ENCODE measurements at regions of chr13 and their contacts with region 1.

Region 1: DNA sequence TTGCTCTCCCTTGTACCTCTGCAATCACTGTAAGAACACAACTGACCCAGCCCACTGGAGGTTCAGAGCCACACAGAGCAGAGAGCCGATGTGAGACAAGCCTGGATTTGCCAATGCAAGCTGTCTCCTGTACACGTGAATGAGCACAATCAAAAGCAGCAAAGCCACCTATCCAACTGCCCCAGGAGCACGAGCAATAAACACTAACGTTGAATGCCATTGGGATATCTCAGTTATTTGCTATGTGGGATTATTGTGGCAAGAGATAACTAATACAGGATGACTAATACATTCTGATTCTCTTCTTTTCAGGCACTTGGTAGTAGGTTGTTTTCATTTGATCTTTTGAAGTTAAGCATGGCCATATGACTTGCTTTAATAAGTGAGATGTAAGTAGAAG is 85.2 kb upstream of the FAM216B start:
- DNase-seq: no peak
- ATAC-seq: no peak
- H3K4me3 ChIP-seq: no peak overlapping the region
- H3K4me3 Mint-ChIP-seq: no peak overlapping the region
- H3K27ac ChIP-seq: no peak overlapping the region
- H3K27ac Mint-ChIP-seq: no peak overlapping the region
- H3K4me1 ChIP-seq: no peaks in the 10 kb centered on the region
- H3K4me1 Mint-ChIP-seq: no peaks in the 10 kb centered on the region
- H3K27me3 ChIP-seq: peaks cover 0 to 10% of the 10 kb centered on the region in 2 experiments
- H3K27me3 Mint-ChIP-seq: peaks cover 27 to 45% of the 10 kb centered on the region in 2 donors

Region 2: DNA sequence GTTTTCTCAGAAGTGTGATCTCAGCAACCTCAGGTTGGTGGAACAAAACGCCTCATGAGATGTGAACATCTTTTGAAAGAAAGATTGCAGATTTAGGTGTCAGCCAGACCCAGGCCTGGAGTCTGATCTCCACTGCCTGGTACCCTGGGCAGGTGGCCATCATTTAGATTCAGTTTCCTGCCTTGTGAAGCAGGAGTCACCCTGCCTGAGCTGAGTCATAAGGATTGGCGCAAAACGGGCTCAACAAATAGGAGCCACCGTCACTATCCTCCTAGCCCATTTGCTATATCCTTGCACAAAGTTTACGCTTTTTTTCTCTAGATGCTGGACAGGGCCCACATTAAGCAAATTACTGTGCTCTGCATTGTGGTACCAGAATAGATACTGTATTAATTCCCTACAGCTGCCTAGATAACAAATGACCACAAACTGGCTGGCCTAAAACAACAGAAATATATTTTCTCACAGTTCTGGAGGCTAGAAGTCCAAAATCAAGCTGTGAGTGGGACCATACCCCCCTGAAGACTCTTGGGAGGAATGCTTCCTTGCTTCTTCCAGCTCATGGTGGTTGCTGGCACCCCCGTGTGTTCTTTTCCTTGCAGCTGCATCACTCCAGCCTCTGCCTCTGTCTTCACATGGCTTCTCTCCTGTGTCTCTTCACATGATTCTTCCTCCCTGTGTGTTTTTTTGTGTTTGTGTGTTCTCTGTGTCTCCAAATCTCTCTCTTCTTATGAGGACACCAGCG is 84.0 kb before region 1 on chr13:
- CTCF ChIA-PET with region 1: no interaction called
- POLR2A ChIA-PET with region 1: no interaction called
- DNase-seq: no peak
- ATAC-seq: no peak
- H3K4me3 ChIP-seq: no peak overlapping the region
- H3K4me3 Mint-ChIP-seq: no peak overlapping the region
- H3K27ac ChIP-seq: no peak overlapping the region
- H3K27ac Mint-ChIP-seq: no peak overlapping the region
- H3K4me1 ChIP-seq: no peaks in the 10 kb centered on the region
- H3K4me1 Mint-ChIP-seq: no peaks in the 10 kb centered on the region
- H3K27me3 ChIP-seq: peaks cover 0 to 7% of the 10 kb centered on the region in 2 experiments
- H3K27me3 Mint-ChIP-seq: peaks cover 13% of the 10 kb centered on the region in 2 donors

Region 3: GRCh38 chr13:42867232-42867631 is 171.0 kb after region 1 on chr13:
- CTCF ChIA-PET with region 1: no interaction called
- POLR2A ChIA-PET with region 1: interaction called in 1 of 2 experiments, 11 read pairs
- DNase-seq: no peak
- ATAC-seq: no peak
- H3K4me3 ChIP-seq: no peak overlapping the region
- H3K4me3 Mint-ChIP-seq: no peak overlapping the region
- H3K27ac ChIP-seq: no peak overlapping the region
- H3K27ac Mint-ChIP-seq: no peak overlapping the region
- H3K4me1 ChIP-seq: no peaks in the 10 kb centered on the region
- H3K4me1 Mint-ChIP-seq: no peaks in the 10 kb centered on the region
- H3K27me3 ChIP-seq: no peaks in the 10 kb centered on the region
- H3K27me3 Mint-ChIP-seq: peaks cover 4 to 10% of the 10 kb centered on the region in 2 donors

Region 4: DNA sequence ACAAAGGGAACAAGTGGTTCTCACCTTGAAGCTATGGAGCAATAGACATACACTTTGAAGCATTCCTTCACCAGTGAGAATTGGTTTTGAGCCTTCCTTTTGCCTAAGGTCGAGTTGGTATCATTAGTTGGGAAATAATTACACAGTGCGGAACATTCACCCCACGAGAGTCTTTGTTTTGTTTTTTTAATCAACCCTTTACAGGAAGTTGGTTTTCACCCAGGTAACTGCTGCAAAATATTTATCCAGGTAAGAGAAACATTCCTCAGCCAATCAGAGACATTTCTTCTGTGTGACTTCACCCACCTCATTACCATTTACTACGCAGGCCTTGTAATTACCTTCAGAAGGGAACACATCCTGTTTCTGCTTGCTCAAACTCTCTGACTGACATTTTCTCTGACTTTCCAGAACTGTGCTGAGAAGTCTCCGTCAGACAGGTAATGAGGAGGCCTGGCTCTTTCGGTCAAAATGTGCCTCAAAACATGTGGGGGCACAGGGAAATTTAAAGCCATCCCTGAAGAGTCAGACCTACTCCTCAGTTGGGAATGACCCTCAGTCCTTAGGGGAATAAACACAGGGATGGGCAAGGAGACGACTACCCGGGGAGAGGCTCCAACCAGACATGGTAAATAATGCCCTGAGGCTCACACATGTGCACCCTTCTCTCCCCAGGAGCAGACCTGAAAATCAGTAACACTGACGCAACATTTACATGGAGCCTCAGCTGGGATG is 1654.8 kb after region 1 on chr13:
- CTCF ChIA-PET with region 1: no interaction called
- POLR2A ChIA-PET with region 1: no interaction called
- DNase-seq: peak in 1 of 35 experiments; percentile 7
- ATAC-seq: peak in 2 of 4 experiments; percentile 38 to 70
- H3K4me3 ChIP-seq: no peak overlapping the region
- H3K4me3 Mint-ChIP-seq: no peak overlapping the region
- H3K27ac ChIP-seq: no peak overlapping the region
- H3K27ac Mint-ChIP-seq: no peak overlapping the region
- H3K4me1 ChIP-seq: peaks cover 14 to 17% of the 10 kb centered on the region in 2 experiments
- H3K4me1 Mint-ChIP-seq: peaks cover 20 to 26% (median 24%) of the 10 kb centered on the region in 3 donors
- H3K27me3 ChIP-seq: no peaks in the 10 kb centered on the region
- H3K27me3 Mint-ChIP-seq: peaks cover 3% of the 10 kb centered on the region in 2 donors

Measured in T-cell (primary cell).